PC-9 (cell line): ENCODE measurements at regions of chr4 and their contacts with region 1.

Region 1: GRCh38 chr4:127782274-127783025 is at the start of gene HSPA4L:
- DNase-seq: peak; percentile 23 to 73
- H3K4me3 ChIP-seq: peak within 1 kb of the TSS; percentile 84
- H3K27ac ChIP-seq: peak within 1 kb of the TSS; percentile 25
- H3K4me1 ChIP-seq: peaks cover 25% of the 10 kb centered on the region
- H3K27me3 ChIP-seq: no peaks in the 10 kb centered on the region
- CTCF ChIP-seq: no peak; the same call in none of the 2 replicates
- total RNA-seq, gene HSPA4L: 4.6 and 5.1 TPM in 2 replicates

Region 2: DNA sequence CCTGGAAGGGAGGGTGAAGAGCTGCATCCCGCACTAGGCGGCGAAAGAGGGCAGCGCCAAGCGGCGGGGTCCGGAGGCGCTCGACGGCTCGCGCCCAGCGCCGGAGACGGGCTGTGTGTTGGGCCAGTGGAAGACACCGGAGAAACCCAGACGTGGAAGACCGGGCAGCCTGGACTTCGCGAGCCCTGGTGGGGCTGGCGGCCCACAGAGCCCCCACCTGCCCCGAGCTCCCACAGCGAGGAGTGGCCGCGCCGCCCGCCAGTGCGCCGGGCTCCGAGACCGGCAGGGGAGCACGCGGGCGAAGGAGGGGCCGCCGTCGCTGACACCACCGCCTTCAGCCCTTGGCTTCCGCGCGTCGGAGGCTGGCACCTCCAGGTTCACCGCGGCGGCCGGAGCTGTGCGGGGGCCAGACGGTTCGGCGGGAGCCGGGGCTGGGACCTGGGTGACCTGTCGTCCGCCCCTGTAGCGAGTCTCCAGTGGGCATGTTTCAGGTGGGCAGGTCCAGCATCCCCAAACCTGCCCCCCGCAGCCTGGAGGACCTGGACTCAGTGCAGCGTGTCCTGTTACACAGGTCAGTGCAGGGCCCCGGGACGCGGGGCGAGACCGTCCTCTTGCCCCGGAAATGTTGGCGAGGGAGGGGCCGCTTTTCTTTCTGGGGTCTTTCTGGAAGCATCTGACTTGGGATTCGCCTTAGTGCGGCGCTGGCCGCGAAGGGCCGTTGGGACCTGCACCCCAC is 159.4 kb before region 1 on chr4:
- CTCF ChIA-PET with region 1: no interaction called
- POLR2A ChIA-PET with region 1: interaction called, 14 read pairs
- intact Hi-C with region 1: no loop called
- DNase-seq: peak; percentile 60 to 69
- H3K4me3 ChIP-seq: peak overlapping the region; percentile 62
- H3K27ac ChIP-seq: no peak overlapping the region
- H3K4me1 ChIP-seq: no peaks in the 10 kb centered on the region
- H3K27me3 ChIP-seq: 0 out of 2 replicates have a peak, but pooled peaks cover 6% of the 10 kb centered on the region
- CTCF ChIP-seq: peak; percentile 61

Region 3: DNA sequence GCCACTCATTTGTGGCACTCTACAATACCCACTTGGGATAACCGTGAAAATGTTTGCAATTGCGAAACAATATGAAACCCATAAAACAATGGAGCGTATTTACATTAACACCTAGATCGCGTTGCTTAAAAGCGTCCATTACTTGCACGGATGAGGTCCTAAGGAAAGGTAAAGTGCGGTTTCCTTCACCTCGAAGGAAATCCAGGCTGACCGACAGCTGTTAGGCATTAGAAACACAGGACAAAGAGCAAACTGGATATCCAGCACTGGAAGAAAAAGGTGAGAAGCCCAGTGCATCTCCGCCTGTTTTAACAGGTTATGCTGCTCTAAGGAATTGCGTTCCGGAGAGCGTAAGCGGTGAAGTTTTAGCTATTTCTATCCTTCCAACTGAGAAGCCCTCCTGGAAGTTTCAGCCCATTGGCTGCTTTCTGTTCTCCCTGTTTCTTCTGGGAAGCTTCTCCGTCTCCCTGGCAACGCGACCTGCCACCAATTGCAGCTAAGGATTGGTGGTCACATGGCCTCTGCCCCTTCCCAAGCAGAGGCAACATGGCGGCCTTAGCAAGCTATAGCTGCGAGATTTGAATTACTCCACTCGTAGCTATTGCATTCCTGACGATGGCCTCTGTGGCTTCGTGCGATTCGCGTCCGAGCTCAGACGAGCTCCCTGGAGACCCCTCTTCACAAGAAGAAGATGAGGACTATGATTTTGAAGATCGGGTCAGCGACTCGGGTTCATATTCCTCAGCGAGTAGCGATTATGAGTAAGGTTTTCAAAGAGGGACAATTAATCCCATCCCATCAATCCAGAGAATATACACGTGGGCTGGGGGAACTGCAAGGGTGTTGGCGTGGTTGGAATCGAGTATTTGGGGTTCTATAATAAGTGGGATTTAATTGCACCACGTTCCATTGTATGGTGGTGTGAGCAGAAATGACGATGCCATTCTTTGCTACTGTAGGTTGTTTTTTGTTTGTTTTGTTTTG is 149.7 kb before region 1 on chr4 and contains the start of gene INTU:
- CTCF ChIA-PET with region 1: no interaction called
- POLR2A ChIA-PET with region 1: no interaction called
- intact Hi-C with region 1: loop called (anchors 5 kb)
- DNase-seq: peak; percentile 89 to 98
- H3K4me3 ChIP-seq: peak within 1 kb of the TSS; percentile 67
- H3K27ac ChIP-seq: peak within 1 kb of the TSS; percentile 44
- H3K4me1 ChIP-seq: peaks cover 26% of the 10 kb centered on the region
- H3K27me3 ChIP-seq: no peaks in the 10 kb centered on the region
- CTCF ChIP-seq: no peak
- total RNA-seq, gene INTU: 9.7 and 10.5 TPM in 2 replicates

Region 4: GRCh38 chr4:127737295-127737694 is 45.2 kb before region 1 on chr4:
- CTCF ChIA-PET with region 1: no interaction called
- POLR2A ChIA-PET with region 1: no interaction called
- intact Hi-C with region 1: no loop called
- DNase-seq: no peak
- H3K4me3 ChIP-seq: no peak overlapping the region
- H3K27ac ChIP-seq: no peak overlapping the region
- H3K4me1 ChIP-seq: no peaks in the 10 kb centered on the region
- H3K27me3 ChIP-seq: no peaks in the 10 kb centered on the region
- CTCF ChIP-seq: no peak

Region 5: DNA sequence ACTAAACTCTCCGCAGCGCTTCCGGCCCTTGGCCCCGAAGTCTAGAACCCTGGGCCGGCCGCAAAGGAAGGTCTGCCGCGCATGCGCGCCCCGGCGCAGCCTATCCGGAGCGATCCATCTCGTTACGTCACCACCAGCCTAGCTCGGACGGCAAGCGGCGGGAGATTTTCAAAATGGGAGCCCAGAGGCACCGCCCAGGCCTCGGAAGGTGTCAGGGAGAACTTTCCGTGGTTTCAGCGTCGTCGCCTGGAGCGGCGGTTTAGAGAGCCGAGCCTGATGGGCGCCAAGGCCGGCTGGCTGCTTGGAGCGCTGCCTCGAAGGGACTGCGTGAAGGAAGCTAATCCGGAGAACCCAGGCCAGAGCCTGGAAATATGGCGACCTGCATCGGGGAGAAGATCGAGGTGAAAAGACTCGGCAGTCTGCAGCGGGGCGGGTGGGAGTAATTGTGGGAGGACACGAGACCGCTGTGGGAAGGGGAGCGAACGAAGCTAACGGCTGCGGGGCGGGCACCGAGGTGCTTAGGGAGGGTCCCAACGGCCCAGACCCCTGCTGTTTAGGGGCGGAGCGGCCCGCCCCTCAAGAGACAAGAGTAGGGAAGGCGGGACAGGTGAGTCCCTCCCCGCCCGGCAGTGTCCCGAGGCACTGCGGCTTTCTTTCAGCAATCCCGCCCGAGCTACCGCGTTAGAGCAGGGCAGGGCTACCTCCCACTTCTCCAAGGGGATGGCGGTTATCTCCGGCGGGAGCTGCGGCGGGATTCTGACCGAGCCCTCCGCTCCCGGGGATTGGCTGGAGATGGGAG is 98.5 kb after region 1 on chr4 and contains the start of gene PLK4:
- CTCF ChIA-PET with region 1: interaction called, 3 read pairs
- POLR2A ChIA-PET with region 1: no interaction called
- intact Hi-C with region 1: loop called (anchors 1 kb)
- DNase-seq: peak; percentile 73 to 93
- H3K4me3 ChIP-seq: peak within 1 kb of the TSS; percentile 83
- H3K27ac ChIP-seq: peak within 1 kb of the TSS; percentile 73
- H3K4me1 ChIP-seq: peaks cover 15% of the 10 kb centered on the region; the same call in 1 of the 2 replicates
- H3K27me3 ChIP-seq: no peaks in the 10 kb centered on the region
- CTCF ChIP-seq: no peak
- total RNA-seq, gene PLK4: 23.3 and 25.7 TPM in 2 replicates

Region 6: DNA sequence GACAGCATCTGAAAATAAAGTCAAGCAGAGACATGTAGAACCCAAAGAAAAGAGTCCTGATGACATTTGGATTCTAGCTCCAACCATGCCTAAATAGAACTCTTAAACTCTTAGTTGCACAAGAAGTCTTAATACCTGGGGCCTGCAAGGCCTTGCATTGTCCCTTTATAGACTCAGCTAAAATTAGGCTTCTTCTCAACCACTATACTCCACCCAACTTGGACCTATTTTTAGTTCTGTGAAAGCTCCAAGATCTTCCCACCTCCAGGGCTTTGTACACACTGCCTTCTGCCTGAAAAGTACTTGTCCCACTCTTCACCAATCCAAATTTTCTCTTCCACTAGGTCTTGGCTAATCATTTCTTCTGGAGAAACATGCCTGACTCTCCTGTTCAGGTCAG is 134.7 kb after region 1 on chr4:
- CTCF ChIA-PET with region 1: no interaction called
- POLR2A ChIA-PET with region 1: interaction called, 29 read pairs
- intact Hi-C with region 1: no loop called
- DNase-seq: no peak
- H3K4me3 ChIP-seq: no peak overlapping the region
- H3K27ac ChIP-seq: no peak overlapping the region
- H3K4me1 ChIP-seq: no peaks in the 10 kb centered on the region
- H3K27me3 ChIP-seq: no peaks in the 10 kb centered on the region
- CTCF ChIP-seq: no peak

Region 7: DNA sequence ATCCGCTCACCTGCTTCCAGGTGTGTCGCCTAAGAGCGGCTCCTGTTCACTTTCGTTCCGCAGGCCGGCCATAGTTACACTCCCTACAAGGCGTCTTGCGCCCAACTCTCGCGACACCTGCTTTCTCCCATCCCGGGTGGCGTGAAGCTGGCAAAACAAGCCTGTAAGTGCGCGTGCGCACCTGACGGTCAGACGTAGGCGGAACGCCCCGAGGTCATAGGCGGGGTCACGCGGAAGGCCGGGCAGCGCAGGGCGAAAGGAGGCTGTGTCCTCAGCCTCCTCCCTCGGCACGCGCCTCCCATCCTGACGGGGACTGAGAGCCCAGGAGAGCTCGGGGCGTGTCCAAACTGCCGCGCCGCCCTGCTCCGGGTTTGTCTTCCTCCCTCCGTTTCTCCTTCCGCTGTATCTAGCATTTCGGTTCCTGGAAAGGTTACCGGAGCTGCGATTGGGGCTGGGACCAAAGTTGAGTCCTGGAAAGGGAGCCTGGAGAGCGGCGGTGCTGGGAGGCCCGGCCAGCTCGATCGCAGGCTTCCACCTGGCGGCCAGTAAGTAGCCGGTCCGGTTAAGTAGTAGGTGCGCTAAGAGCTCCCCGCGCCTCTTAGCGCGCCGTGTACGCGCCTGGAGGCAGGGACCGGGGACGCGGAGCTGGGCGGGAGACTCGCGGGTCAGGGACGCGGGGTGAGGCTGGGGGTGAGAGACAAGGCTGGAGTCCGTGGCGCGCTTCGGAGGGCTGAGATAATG is 182.8 kb after region 1 on chr4 and contains the starts of genes ABHD18 and MFSD8:
- CTCF ChIA-PET with region 1: no interaction called
- POLR2A ChIA-PET with region 1: no interaction called
- intact Hi-C with region 1: loop called (anchors 1 kb)
- DNase-seq: peak; percentile 90 to 100
- H3K4me3 ChIP-seq: peak within 1 kb of the TSS; percentile 77
- H3K27ac ChIP-seq: peak within 1 kb of the TSS; percentile 74
- H3K4me1 ChIP-seq: no peaks in the 10 kb centered on the region; the same call in 1 of the 2 replicates
- H3K27me3 ChIP-seq: no peaks in the 10 kb centered on the region
- CTCF ChIP-seq: peak; percentile 46; the same call in 1 of the 2 replicates
- total RNA-seq, gene ABHD18: 10.4 and 12.4 TPM in 2 replicates
- total RNA-seq, gene MFSD8: 19.0 and 21.4 TPM in 2 replicates

Region 8: GRCh38 chr4:128060699-128061565 is 278.5 kb after region 1 on chr4 and contains the start of gene LARP1B:
- CTCF ChIA-PET with region 1: no interaction called
- POLR2A ChIA-PET with region 1: no interaction called
- intact Hi-C with region 1: loop called (anchors 5 kb)
- DNase-seq: peak; percentile 82 to 98
- H3K4me3 ChIP-seq: peak within 1 kb of the TSS; percentile 88
- H3K27ac ChIP-seq: peak within 1 kb of the TSS; percentile 93
- H3K4me1 ChIP-seq: peaks cover 4% of the 10 kb centered on the region; the same call in 1 of the 2 replicates
- H3K27me3 ChIP-seq: no peaks in the 10 kb centered on the region
- CTCF ChIP-seq: no peak
- total RNA-seq, gene LARP1B: 17.7 and 22.0 TPM in 2 replicates